ENCODE measurements at regions of chr3 and their contacts with region 1.

Region 1: DNA sequence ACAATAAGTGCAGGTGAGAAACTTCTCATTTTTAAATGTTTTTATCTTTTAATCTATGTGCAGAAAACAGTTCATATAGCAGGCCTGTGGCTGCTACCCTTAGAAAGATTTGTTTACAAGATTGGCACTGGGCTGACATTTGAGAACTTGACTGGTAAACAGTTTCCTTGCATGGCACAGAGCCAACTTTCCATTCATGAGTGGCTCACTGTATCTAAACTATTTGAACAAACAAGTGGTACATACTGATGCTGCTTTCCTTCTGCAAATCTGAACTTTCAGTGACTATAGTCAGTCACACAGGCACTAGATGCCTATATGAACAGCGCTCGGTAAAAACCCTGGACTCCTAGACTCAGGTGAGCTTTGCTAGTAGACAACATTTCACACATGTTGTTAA is 6.3 kb upstream of the GTPBP8 start:
- DNase-seq: no peak
- ATAC-seq: no peak
- H3K4me3 ChIP-seq: no peak overlapping the region
- H3K27ac ChIP-seq: no peak overlapping the region
- H3K4me1 ChIP-seq: no peaks in the 10 kb centered on the region
- H3K27me3 ChIP-seq: peaks cover 19% of the 10 kb centered on the region
- CTCF ChIP-seq: no peak

Region 2: GRCh38 chr3:112582244-112582874 is 402.1 kb before region 1 on chr3:
- CTCF ChIA-PET with region 1: no interaction called
- POLR2A ChIA-PET with region 1: no interaction called
- in situ Hi-C with region 1: no loop called
- intact Hi-C with region 1: loop called (anchors 5 kb)
- DNase-seq: peak; percentile 27
- ATAC-seq: no peak; the same call in 1 of the 2 replicates
- H3K4me3 ChIP-seq: no peak overlapping the region
- H3K27ac ChIP-seq: no peak overlapping the region
- H3K4me1 ChIP-seq: no peaks in the 10 kb centered on the region
- H3K27me3 ChIP-seq: no peaks in the 10 kb centered on the region
- CTCF ChIP-seq: peak; percentile 74; the same call in 1 of the 2 replicates